Right ventricle myocardium inferior (tissue), 1 donor: ENCODE measurements at regions of chr6 and their contacts with region 1.

Region 1: GRCh38 chr6:21593412-21593926 is at the start of gene SOX4:
- DNase-seq: peak; percentile 94
- ATAC-seq: peak; percentile 83
- total RNA-seq, gene SOX4: 7.8 TPM

Region 2: GRCh38 chr6:20789162-20789561 is 804.3 kb before region 1 on chr6:
- intact Hi-C with region 1: loop called (anchors 1 kb)
- DNase-seq: no peak
- ATAC-seq: no peak

Region 3: GRCh38 chr6:21648475-21649130 is 55.1 kb after region 1 on chr6:
- intact Hi-C with region 1: no loop called
- DNase-seq: no peak
- ATAC-seq: no peak

Region 4: GRCh38 chr6:21664314-21665109 is 71.0 kb after region 1 on chr6:
- intact Hi-C with region 1: no loop called
- DNase-seq: no peak
- ATAC-seq: peak; percentile 29

Region 5: DNA sequence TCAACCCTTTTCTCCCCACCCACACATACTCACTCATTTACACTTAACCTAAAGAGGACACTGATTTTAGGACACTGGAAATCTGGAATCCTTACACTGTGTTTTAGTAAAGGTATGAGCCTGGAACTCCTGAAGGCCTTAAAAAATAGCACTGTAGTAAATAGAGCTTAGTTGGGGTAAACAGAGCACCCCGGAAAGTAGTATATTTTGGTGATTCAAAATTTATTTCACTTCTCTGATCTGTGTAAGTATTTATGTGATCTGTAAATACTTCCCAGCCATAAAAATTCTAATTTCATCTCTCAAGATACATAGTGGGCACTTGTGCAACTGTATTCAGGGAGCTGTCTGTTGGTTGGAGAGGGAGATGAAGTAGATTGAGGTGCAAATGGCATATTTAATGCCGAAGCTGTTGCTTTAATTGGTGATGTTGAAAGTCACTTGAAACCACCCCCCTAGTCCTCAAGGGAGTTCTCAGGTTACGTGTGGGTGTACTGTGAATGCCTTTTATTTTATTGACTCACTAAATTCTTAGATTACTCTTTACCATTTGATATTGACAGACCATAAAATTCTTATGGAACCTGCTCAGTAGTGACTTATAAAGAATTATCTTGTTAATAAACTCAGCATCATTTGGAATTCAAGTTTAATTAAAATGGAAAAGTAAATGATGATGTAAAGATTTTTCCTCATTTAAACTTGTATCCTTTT is 155.0 kb after region 1 on chr6:
- intact Hi-C with region 1: loop called (anchors 10 kb)
- DNase-seq: no peak
- ATAC-seq: no peak

Region 6: GRCh38 chr6:22145823-22146677 is 552.6 kb after region 1 on chr6:
- intact Hi-C with region 1: loop called (anchors 5 kb)
- DNase-seq: no peak
- ATAC-seq: peak; percentile 29

Region 7: DNA sequence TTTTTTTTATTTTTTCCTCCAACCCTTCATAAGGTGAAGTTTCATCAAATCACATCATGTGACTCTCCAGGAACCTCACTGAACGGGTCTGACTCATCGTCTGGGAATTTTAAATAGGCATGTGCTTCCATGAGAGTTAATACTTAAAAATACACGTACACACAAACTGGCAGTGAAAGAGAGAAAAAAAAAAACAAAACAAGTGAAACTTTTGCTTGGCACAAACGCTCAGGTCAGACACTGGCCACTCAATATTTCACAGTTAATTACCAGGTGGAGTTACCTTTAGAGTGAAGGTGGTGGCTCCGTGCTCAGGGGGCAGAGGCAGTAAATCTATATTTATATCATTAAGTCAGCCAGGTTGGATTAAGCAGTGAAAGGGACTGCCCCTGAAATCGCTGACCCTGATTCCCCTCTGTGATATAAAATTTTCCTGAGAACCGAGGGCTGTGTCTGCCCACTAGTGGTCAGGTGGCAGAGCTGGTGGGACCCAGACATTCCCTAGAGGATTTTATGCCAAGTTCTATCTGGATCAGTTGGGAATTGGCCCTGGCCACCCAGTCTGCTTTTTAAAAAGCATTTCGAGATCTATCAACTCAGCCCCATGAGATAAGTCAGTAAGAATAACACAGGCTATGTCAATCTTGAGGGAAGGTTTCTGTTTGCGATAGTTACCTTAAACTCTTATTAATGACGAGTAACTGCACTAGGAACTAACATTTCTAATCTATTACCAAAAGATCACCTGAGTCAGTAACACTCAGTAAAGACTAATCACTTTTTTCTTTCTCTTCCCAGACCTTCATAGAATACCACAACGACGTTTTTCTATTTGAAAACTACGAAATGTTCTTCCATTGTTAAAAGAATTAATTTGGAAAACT is 1235.0 kb after region 1 on chr6:
- intact Hi-C with region 1: loop called (anchors 10 kb)
- DNase-seq: no peak
- ATAC-seq: peak; percentile 72

Region 8: GRCh38 chr6:23446394-23447046 is 1853.1 kb after region 1 on chr6:
- intact Hi-C with region 1: loop called (anchors 2 kb)
- DNase-seq: no peak
- ATAC-seq: peak; percentile 81